Heart right ventricle (tissue), 16 donors: ENCODE measurements at regions of chr3 and their contacts with region 1.

Region 1: DNA sequence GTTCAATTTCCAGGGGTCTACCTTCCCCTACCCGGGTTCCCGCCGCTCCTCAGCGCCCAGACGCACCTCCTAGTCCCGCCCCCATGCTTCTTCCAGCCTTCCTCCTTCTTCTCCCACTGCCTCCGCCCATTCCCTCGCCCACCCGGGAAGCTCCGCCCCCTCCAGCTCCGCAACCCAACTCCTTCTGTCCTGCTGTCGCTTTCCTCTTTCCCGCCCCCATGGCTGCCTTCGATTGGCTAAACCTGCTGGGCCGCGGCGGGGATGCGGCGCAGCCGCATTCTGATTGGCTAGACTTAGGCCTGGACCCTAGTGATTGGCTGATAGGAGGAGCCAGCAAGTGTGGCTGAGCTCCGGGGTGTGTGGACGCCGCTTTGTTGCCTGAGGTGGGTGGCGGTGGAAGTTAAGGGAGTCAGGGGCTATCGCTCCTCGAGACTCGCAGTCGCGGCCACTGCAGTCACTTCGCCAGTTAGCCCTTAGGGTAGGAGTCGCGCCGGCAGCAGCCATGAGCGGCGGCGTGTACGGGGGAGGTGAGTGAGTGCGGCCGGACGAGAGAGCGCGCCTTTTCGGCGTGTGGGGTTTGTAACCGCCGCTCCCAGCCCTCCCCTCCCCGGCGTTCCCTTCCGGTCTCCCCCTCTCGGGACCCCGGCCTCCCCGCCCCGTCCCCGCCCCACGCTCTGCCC is at the start of gene ACTL6A:
- DNase-seq: peak; percentile 100
- ATAC-seq: peak; percentile 98 to 99 (median 99)
- H3K4me3 ChIP-seq: peak within 1 kb of the TSS; percentile 78 to 97 (median 86)
- H3K27ac ChIP-seq: peak within 1 kb of the TSS; percentile 55 to 93 (median 88)
- H3K4me1 ChIP-seq: peaks cover 0 to 25% (median 16%) of the 10 kb centered on the region in 9 donors
- H3K27me3 ChIP-seq: no peaks in the 10 kb centered on the region
- CTCF ChIP-seq: no peak
- total RNA-seq, gene ACTL6A: 13.5 to 22.5 (median 17.2) TPM

Region 2: DNA sequence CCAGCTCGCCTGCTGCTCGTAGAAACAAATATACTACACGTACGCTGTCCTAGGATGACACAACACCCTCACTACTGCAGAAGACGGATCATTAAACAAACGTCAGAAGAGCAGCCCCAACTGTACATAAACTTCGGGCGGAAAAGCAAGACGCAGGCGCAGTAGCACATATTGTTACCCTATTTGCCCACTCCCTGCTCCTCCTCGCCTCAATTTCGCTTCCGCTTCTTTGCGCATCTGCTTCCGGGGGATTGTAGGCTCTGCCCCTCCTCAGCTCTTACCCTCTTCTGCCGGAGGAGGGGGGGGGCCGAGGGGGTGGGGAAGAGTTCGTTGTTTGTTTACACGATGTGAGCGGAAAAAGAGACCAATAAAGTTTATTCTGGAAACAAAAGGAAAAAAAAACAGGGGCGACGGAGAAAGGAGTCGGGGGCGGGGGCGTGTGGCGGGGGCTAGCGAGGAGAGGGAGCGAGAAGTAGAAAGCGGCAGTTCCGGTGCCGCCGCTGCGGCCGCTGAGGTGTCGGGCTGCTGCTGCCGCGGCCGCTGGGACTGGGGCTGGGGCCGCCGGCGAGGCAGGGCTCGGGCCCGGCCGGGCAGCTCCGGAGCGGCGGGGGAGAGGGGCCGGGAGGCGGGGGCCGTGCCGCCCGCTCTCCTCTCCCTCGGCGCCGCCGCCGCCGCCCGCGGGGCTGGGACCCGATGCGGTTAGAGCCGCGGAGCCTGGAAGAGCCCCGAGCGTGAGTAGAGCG is 414.7 kb before region 1 on chr3 and contains the start of gene PIK3CA:
- intact Hi-C with region 1: loop called in 1 of 10 experiments (anchors 5 kb)
- DNase-seq: peak; percentile 87 to 97
- ATAC-seq: peak; percentile 96 to 99 (median 98)
- H3K4me3 ChIP-seq: peak within 1 kb of the TSS; percentile 75 to 97 (median 88)
- H3K27ac ChIP-seq: peak within 1 kb of the TSS; percentile 94 to 99 (median 98)
- H3K4me1 ChIP-seq: peaks cover 2 to 40% (median 34%) of the 10 kb centered on the region in 9 donors
- H3K27me3 ChIP-seq: no peaks in the 10 kb centered on the region
- CTCF ChIP-seq: no peak
- total RNA-seq, gene PIK3CA: 17.5 to 35.3 (median 24.4) TPM

Region 3: GRCh38 chr3:179347345-179348194 is 215.2 kb before region 1 on chr3 and contains the start of gene MFN1:
- intact Hi-C with region 1: loop called in 4 of 10 experiments (anchors 1 to 10 kb)
- DNase-seq: peak; percentile 91 to 96
- ATAC-seq: peak; percentile 98 to 100 (median 99)
- H3K4me3 ChIP-seq: peak within 1 kb of the TSS; percentile 68 to 84 (median 76)
- H3K27ac ChIP-seq: peak within 1 kb of the TSS; percentile 72 to 92 (median 88)
- H3K4me1 ChIP-seq: peaks cover 0 to 30% (median 11%) of the 10 kb centered on the region in 9 donors
- H3K27me3 ChIP-seq: no peaks in the 10 kb centered on the region
- CTCF ChIP-seq: no peak
- total RNA-seq, gene MFN1: 52.0 to 82.1 (median 67.9) TPM

Region 4: DNA sequence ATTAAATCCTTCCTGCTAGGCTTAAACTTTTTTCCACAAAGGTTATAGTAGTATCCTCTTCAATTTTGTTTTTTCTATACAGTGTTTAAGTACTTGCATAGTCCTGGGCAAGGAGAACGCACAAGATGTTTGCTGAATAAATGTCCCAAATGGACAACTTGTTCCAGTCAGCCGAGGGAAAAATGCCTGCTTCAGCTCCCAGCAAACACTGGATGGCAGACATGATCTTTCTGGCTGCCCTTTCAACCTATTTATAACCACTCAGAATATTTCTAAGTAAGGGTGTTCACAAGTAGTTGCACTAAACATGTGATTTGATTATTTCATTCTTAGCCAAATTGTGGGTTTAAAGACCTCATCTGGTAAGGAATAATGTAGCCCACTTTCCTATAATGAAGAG is 141.2 kb before region 1 on chr3:
- intact Hi-C with region 1: loop called (anchors 1 to 5 kb)
- DNase-seq: peak in 1 of 2 donors; percentile 53
- ATAC-seq: peak; percentile 64 to 92 (median 82)
- H3K4me3 ChIP-seq: no peak overlapping the region
- H3K27ac ChIP-seq: peak overlapping the region in 4 of 10 donors; percentile 2 to 51 (median 22)
- H3K4me1 ChIP-seq: peaks cover 0 to 13% (median 10%) of the 10 kb centered on the region in 9 donors
- H3K27me3 ChIP-seq: no peaks in the 10 kb centered on the region
- CTCF ChIP-seq: peak; percentile 51 to 84 (median 68)

Region 5: DNA sequence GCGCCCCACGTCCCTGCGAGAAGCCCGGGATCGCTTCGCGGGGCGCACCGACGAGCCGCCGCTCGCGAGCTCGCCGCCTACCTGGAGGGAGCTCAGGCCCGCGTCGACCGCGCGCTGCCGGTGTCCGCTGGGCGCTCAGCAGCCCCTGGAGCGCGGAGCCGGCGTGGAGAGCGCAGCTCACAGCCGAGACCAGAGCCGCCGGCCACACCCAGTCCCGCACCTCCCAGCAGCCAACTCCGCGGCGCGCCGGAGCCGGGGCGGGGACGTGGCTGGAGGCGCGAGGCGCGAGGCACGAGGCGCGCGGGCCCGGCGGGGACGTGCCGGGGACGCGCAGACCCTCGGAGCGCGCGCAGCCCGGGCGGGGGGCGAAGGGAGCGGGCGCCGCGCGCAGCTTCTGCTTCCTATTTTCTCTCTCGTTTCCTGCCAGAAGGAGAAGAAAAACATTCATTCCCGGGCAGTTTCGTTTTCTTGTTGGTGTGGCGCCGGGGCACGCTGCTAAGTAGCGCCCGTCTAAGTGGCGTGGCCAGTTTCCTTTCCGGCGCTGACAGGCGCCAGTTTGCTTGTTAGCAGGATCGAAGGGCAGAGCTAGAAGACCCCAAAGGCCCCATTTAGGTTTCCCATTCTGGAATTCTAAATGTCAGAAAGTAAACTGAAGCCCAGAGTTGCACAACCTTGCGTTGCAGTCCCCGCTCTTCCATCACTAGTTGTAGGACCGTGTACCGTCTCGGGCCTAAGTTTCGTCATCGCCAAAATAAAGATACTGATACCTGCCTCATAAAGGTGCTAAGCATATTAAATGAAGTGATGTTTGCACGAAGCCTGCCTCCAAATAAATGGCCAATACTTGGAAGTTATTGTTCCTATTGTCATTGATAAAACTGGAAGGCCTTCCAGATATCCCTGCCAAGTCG is 111.2 kb before region 1 on chr3 and contains the start of gene GNB4:
- intact Hi-C with region 1: loop called in 4 of 10 experiments (anchors 2 to 5 kb)
- DNase-seq: peak; percentile 77 to 86
- ATAC-seq: peak; percentile 87 to 96 (median 90)
- H3K4me3 ChIP-seq: peak within 1 kb of the TSS; percentile 65 to 89 (median 80)
- H3K27ac ChIP-seq: peak within 1 kb of the TSS; percentile 92 to 97 (median 95)
- H3K4me1 ChIP-seq: peaks cover 0 to 52% (median 45%) of the 10 kb centered on the region in 9 donors
- H3K27me3 ChIP-seq: no peaks in the 10 kb centered on the region
- CTCF ChIP-seq: no peak
- total RNA-seq, gene GNB4: 12.4 to 48.2 (median 13.4) TPM